Mammary epithelial cell (primary cell): ENCODE measurements at regions of chr9 and their contacts with region 1.

Region 1: DNA sequence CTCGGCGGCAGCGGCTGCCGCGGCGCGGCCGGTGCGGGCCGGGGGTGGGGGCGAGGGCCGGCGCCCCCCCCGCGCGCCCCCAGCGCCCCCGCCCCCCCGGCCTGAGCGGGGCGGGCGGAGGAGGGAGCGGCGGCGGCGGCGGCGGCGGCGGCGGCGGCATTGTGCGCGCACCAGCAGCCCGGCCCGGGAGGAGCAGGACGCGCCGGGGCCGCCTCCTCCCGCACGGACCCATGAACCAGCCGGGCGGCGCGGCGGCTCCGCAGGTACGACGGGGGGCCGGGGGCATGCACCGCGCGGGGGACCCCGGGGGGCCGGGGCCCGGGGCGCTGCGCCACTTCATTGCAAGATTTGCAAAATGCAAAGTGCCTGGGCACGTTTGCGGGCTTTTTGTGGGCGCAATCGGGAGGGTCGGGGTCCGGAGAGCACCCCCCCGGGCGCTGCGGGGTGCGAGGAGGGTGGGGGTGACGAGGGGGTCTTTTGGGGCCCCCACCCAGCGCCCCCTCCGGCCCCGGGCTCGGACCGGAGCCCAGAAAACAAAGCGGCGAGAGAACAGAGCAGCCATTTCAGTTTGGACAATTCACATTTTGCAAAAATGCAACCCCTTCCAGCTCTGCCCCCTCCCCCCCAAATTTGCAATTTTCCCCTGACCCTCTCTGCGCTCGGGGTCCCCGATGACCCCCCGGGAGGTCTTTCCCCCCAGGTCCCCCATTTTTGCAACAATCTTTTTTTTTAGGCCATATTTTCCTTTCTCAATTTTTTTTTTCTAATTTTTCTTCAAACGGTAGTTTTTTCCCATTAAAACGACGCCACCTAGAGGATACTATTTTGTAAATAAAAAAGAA is at the start of gene ZNF618:
- DNase-seq: no peak
- H3K4me3 ChIP-seq: peak within 1 kb of the TSS; percentile 51 to 88 (median 87)
- H3K27ac ChIP-seq: peak within 1 kb of the TSS; percentile 72
- H3K4me1 ChIP-seq: peaks cover 26% of the 10 kb centered on the region
- H3K27me3 ChIP-seq: no peaks in the 10 kb centered on the region
- CTCF ChIP-seq: peak; percentile 23 to 43
- total RNA-seq, gene ZNF618: 18.0 to 19.6 TPM

Region 2: GRCh38 chr9:113682297-113682771 is 194.0 kb before region 1 on chr9:
- CTCF ChIA-PET with region 1: no interaction called
- dilution Hi-C with region 1: no loop called
- in situ Hi-C with region 1: no loop called
- intact Hi-C with region 1: loop called (anchors 2 kb)
- DNase-seq: peak; percentile 85
- H3K4me3 ChIP-seq: no peak overlapping the region
- H3K27ac ChIP-seq: no peak overlapping the region
- H3K4me1 ChIP-seq: peaks cover 16% of the 10 kb centered on the region
- H3K27me3 ChIP-seq: no peaks in the 10 kb centered on the region
- CTCF ChIP-seq: peak; percentile 93 to 95

Region 3: DNA sequence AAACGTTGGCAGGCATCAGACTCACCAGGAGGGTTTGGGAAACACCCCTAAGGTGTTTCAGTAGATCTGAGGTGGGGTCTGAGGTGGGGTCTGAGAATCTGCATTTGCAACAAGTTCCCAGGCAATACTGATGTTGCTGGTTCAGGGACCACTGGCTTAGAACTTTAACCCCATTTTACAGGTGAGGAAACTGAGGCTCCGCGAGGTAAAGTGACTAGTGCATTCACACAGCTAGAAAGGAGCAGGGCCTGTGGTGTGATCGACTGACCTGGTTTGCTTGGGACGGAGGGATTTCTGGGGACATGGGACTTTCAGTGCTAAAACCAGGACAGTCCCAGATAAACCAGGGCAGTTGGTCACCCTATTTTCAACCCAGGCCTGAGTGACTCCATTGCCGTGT is 81.7 kb before region 1 on chr9:
- CTCF ChIA-PET with region 1: no interaction called
- dilution Hi-C with region 1: loop called (anchors 5 kb)
- in situ Hi-C with region 1: no loop called
- intact Hi-C with region 1: no loop called
- DNase-seq: no peak
- H3K4me3 ChIP-seq: no peak overlapping the region
- H3K27ac ChIP-seq: no peak overlapping the region
- H3K4me1 ChIP-seq: no peaks in the 10 kb centered on the region
- H3K27me3 ChIP-seq: peaks cover 4% of the 10 kb centered on the region
- CTCF ChIP-seq: no peak

Region 4: GRCh38 chr9:113853324-113853723 is 23.0 kb before region 1 on chr9:
- CTCF ChIA-PET with region 1: no interaction called
- dilution Hi-C with region 1: no loop called
- in situ Hi-C with region 1: no loop called
- intact Hi-C with region 1: loop called (anchors 1 kb)
- DNase-seq: no peak
- H3K4me3 ChIP-seq: no peak overlapping the region
- H3K27ac ChIP-seq: no peak overlapping the region
- H3K4me1 ChIP-seq: no peaks in the 10 kb centered on the region
- H3K27me3 ChIP-seq: peaks cover 2% of the 10 kb centered on the region
- CTCF ChIP-seq: peak; percentile 71 to 80

Region 5: GRCh38 chr9:113919382-113919781 is 43.0 kb after region 1 on chr9:
- CTCF ChIA-PET with region 1: no interaction called
- dilution Hi-C with region 1: loop called (anchors 5 kb)
- in situ Hi-C with region 1: no loop called
- intact Hi-C with region 1: no loop called
- DNase-seq: no peak
- H3K4me3 ChIP-seq: no peak overlapping the region
- H3K27ac ChIP-seq: no peak overlapping the region
- H3K4me1 ChIP-seq: no peaks in the 10 kb centered on the region
- H3K27me3 ChIP-seq: no peaks in the 10 kb centered on the region
- CTCF ChIP-seq: no peak

Region 6: DNA sequence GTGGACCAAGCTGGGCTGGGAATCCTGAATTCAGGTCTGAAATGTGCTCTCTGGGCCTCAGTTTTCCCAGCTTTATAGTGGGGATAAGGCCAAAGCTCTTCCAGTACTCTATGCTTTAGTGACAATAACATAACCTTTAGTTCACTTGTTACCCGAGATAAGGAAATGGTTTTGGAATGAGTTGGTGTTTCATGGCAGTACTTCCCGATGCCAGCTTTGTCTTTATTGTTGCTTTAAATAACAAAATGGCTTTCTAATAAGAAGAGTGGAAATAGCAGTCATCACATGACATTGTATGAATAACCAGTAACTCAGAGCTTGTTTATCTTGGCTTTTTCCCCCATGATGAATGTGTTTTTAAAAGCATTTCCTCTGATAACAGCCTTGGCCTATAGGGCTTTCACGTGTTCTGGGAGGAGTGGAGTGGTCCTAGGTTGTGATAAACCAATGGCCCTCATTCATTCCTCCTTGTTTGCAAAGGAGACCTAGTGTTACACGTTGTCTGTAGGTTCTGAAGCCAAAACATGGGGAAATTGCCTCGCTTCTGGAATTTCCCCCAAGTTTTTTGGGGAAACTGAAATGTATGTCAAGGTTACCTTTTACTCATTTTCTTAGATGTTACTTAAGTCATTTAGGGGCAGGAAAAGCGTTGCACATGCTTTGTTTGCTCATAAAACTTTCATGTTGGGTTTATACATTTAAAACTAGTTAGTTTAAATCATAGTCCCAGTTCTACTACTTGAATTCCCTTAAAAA is 53.4 kb after region 1 on chr9:
- CTCF ChIA-PET with region 1: no interaction called
- dilution Hi-C with region 1: no loop called
- in situ Hi-C with region 1: no loop called
- intact Hi-C with region 1: no loop called
- DNase-seq: peak; percentile 44
- H3K4me3 ChIP-seq: no peak overlapping the region
- H3K27ac ChIP-seq: no peak overlapping the region
- H3K4me1 ChIP-seq: no peaks in the 10 kb centered on the region
- H3K27me3 ChIP-seq: no peaks in the 10 kb centered on the region
- CTCF ChIP-seq: no peak

Region 7: DNA sequence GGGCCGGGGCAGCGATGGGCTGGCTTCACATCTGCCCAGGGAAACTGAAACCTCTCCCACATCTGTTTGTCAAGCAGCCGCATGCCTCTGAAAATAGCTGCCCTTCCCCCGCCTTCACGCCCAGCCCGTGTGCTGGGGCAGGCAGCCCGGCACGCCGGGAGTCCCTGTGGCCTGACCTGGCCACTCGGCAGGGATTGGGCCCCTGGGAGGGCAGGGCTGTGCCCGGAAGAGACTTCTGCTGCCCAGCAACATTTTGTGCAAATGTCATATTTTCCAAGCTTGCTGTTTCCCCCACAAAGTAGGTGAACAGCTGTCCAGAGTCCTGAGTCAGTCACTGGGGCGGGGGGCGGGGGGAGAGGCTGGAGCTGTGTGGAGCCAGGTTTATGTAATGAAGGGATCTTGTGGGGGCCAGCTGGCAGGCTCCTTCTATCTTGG is 287.2 kb after region 1 on chr9:
- CTCF ChIA-PET with region 1: no interaction called
- dilution Hi-C with region 1: no loop called
- in situ Hi-C with region 1: no loop called
- intact Hi-C with region 1: no loop called
- DNase-seq: no peak
- H3K4me3 ChIP-seq: no peak overlapping the region
- H3K27ac ChIP-seq: no peak overlapping the region
- H3K4me1 ChIP-seq: peaks cover 11% of the 10 kb centered on the region
- H3K27me3 ChIP-seq: no peaks in the 10 kb centered on the region
- CTCF ChIP-seq: no peak